Tibial artery (tissue), 4 donors: ENCODE measurements at regions of chr3 and their contacts with region 1.

Region 1: GRCh38 chr3:38039101-38039898 is at the start of gene DLEC1:
- DNase-seq: peak; percentile 56 to 77
- H3K4me3 ChIP-seq: peak within 1 kb of the TSS; percentile 47 to 55
- H3K27ac ChIP-seq: peak within 1 kb of the TSS; percentile 2 to 11
- H3K4me1 ChIP-seq: peaks cover 0 to 14% (median 10%) of the 10 kb centered on the region in 4 donors
- H3K27me3 ChIP-seq: no peaks in the 10 kb centered on the region
- CTCF ChIP-seq: no peak

Region 2: DNA sequence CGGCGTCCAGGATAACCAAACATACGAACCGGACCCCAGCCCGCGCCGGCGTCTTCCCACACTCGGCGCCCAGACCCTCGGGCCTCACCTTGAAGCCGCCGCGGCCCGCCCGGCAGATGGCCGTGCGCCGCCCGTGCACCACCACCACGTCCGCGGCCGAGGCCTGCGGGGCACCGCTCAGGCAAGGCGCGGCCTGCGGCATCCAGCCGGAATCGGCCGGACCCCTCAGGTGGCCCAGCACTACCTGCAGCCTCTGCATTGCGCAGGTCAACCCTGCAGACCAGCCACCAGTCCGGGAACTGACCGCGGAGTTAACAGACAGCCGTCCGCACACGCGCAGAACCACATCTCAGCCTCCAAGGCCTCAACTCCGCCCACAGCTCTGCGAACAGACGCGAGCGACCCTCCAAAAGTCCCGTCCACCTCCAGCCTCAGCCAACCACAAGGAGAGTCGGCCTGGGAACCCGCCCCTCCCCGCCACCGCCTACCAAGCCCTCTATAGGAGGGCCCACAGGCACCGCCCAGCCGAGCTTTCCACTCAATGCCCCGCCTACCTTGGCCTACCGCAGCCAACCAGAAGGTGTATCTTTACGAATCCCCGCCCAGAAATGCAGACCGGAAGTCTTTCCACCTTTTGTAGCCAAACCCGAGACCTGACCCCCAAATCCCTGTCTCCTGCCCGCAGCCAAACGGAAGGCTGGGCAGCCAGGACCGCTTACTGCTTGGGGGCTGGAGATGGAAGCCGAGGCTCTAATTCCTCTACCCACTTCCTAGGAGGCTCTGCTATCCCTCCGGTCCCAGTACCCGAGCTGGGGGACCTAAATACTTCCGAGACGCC is 97.7 kb after region 1 on chr3 and contains the start of gene ACAA1:
- intact Hi-C with region 1: loop called (anchors 10 kb)
- DNase-seq: peak; percentile 100
- H3K4me3 ChIP-seq: peak within 1 kb of the TSS; percentile 90 to 97
- H3K27ac ChIP-seq: peak within 1 kb of the TSS; percentile 88 to 89
- H3K4me1 ChIP-seq: peaks cover 0 to 67% (median 37%) of the 10 kb centered on the region in 4 donors
- H3K27me3 ChIP-seq: no peaks in the 10 kb centered on the region
- CTCF ChIP-seq: peak in 1 of 2 experiments; percentile 8